ENCODE measurements at regions of chr2 and their contacts with region 1.

Region 1: DNA sequence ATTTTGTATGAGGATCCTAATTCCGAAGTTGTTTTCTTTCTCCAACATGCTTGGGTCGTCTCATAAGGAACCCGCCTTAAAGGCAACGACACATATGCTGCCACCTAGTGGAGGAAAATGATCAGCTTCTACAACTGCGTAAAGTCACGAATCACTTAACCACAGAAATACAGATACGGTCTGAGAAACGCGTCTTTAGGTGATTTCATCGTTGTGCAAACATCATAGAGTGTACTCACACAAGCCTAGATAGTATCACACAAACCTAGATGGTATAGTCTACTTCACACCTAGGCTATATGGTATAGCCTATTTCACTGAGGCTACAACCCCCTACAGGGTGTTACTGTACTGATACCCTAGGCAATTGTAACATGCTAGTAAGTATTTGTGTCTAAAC is 13.1 kb downstream of the GNLY start:
- DNase-seq: peak in 30 of 35 experiments; percentile 16 to 88 (median 51)
- ATAC-seq: peak; percentile 83 to 87 (median 85)
- H3K4me3 ChIP-seq: no peak overlapping the region
- H3K4me3 Mint-ChIP-seq: no peak overlapping the region
- H3K27ac ChIP-seq: no peak overlapping the region
- H3K27ac Mint-ChIP-seq: no peak overlapping the region
- H3K4me1 ChIP-seq: peaks cover 0 to 23% of the 10 kb centered on the region in 2 experiments
- H3K4me1 Mint-ChIP-seq: peaks cover 15 to 38% (median 16%) of the 10 kb centered on the region in 3 donors
- H3K27me3 ChIP-seq: peaks cover 0 to 36% of the 10 kb centered on the region in 2 experiments
- H3K27me3 Mint-ChIP-seq: peaks cover 6 to 7% of the 10 kb centered on the region in 2 donors

Region 2: GRCh38 chr2:85635636-85636035 is 71.7 kb before region 1 on chr2:
- CTCF ChIA-PET with region 1: interaction called, 5 to 48 read pairs
- POLR2A ChIA-PET with region 1: no interaction called
- DNase-seq: no peak
- ATAC-seq: no peak
- H3K4me3 ChIP-seq: no peak overlapping the region
- H3K4me3 Mint-ChIP-seq: no peak overlapping the region
- H3K27ac ChIP-seq: no peak overlapping the region
- H3K27ac Mint-ChIP-seq: peak overlapping the region in 1 of 2 donors; percentile 35
- H3K4me1 ChIP-seq: peaks cover 0 to 2% of the 10 kb centered on the region in 2 experiments
- H3K4me1 Mint-ChIP-seq: peaks cover 17 to 20% (median 17%) of the 10 kb centered on the region in 3 donors
- H3K27me3 ChIP-seq: no peaks in the 10 kb centered on the region
- H3K27me3 Mint-ChIP-seq: no peaks in the 10 kb centered on the region